Panc1 (cell line): ENCODE measurements at regions of chr1 and their contacts with region 1.

Region 1: DNA sequence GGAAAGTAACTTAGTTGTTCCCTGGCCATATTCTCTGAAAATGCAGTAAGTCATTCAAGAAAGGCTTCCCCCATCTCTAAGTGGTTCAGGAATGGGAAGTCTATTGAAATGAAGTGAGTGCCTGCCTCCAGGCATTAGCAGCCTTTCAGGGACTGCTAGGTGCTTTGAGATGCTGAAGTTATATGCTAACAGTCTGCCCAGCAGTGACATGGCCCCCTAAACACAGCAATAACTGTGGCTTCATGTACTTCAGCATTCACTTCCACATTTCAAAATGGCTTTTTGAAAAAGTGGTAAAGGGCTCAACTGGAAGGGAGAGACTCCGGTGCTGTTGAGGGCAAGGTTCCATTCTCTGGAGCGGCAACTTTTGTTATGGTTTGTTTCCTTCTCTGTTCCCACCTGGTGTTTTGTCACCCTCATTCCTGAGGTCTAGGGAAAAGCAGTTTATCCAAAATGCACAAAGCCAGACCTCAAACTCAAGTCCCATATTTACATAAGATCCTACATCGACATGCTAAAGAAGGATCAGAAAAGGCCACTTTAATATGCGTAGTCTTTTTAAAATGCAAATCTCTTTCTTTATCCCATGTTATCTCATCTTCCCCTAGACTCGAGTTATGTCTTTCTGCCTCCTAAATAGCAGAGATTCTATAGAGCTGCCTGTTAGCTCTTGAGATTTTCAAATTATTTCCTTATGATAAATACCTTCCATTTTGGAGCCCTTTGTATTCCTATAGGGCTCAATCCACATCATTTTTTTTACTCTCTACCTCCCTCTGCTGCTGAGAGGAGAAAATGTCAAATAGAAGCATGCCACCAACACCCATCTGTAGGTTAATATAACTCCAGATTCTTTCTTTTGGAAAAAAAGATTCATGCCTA is 34.2 kb upstream of the LRRC8C start:
- DNase-seq: peak; percentile 25
- ATAC-seq: peak; percentile 93
- H3K4me3 ChIP-seq: no peak overlapping the region
- H3K27ac ChIP-seq: no peak overlapping the region
- H3K4me1 ChIP-seq: no peaks in the 10 kb centered on the region; the same call in 1 of the 2 replicates
- H3K27me3 ChIP-seq: no peaks in the 10 kb centered on the region
- CTCF ChIP-seq: peak; percentile 81; the same call in 1 of the 2 replicates

Region 2: DNA sequence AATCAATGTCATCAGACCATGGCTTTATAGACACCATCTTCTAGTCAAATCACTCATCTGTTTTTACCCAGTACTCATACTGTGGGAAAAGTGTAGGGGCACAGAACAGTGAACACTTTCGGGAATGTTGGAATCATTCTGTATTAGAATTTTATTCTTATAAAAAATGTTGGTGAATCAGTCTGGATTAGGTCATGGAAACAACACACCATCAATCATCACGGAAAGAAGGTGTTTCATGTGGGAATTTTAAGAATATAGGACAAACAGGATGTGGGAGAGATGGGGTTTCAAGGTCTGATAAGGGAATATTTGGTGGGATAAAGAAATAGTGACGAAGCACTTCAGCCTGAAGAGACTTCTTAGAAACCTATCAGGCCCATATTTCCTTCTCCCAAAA is 551.0 kb before region 1 on chr1:
- CTCF ChIA-PET with region 1: no interaction called
- POLR2A ChIA-PET with region 1: no interaction called
- in situ Hi-C with region 1: no loop called
- intact Hi-C with region 1: no loop called
- DNase-seq: no peak
- ATAC-seq: no peak
- H3K4me3 ChIP-seq: no peak overlapping the region
- H3K27ac ChIP-seq: no peak overlapping the region
- H3K4me1 ChIP-seq: no peaks in the 10 kb centered on the region
- H3K27me3 ChIP-seq: peaks cover 6% of the 10 kb centered on the region
- CTCF ChIP-seq: no peak

Region 3: GRCh38 chr1:89483010-89483756 is 115.5 kb before region 1 on chr1:
- CTCF ChIA-PET with region 1: interaction called, 3 read pairs
- POLR2A ChIA-PET with region 1: no interaction called
- in situ Hi-C with region 1: no loop called
- intact Hi-C with region 1: loop called (anchors 1 kb)
- DNase-seq: peak; percentile 69
- ATAC-seq: peak; percentile 98
- H3K4me3 ChIP-seq: no peak overlapping the region
- H3K27ac ChIP-seq: no peak overlapping the region
- H3K4me1 ChIP-seq: no peaks in the 10 kb centered on the region
- H3K27me3 ChIP-seq: peaks cover 8% of the 10 kb centered on the region; the same call in 1 of the 2 replicates
- CTCF ChIP-seq: peak; percentile 88

Region 4: GRCh38 chr1:89519779-89520358 is 78.8 kb before region 1 on chr1:
- CTCF ChIA-PET with region 1: no interaction called
- POLR2A ChIA-PET with region 1: no interaction called
- in situ Hi-C with region 1: no loop called
- intact Hi-C with region 1: loop called (anchors 2 kb)
- DNase-seq: peak; percentile 15
- ATAC-seq: no peak
- H3K4me3 ChIP-seq: no peak overlapping the region
- H3K27ac ChIP-seq: no peak overlapping the region
- H3K4me1 ChIP-seq: peaks cover 8% of the 10 kb centered on the region
- H3K27me3 ChIP-seq: no peaks in the 10 kb centered on the region
- CTCF ChIP-seq: peak; percentile 77; the same call in 1 of the 2 replicates